Pancreas (tissue), 10 donors: ENCODE measurements at regions of chr17 and their contacts with region 1.

Region 1: DNA sequence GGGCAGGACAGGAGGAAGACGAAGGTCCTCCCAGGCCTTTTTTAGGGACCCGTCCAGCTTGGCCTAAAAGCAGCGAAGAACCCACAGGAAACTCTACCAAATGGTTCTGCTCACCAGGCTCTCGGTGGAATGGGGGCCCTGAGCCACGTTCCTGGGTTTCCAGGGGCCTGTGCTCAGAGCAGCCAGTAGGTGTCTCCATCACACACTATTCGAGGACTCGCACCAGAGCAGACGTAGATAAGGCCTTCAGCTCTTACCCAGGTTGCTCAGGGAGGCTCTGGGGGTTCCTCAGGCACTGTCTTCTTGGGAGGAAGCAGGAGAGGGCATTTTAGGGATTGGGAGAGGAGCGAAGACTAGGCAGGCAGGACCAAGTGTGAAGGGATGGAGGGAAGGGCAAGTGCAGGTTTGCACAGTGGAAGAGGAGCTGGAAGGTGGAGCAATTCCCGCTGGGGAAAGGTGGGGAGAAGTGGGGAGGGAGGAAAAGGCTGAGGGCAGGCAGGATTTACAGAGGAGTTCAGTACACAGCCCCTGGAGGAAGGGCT is 157.1 kb downstream of the RGS9 start:
- DNase-seq: peak; percentile 32 to 68 (median 58)
- ATAC-seq: peak; percentile 84 to 95 (median 94)
- H3K4me3 ChIP-seq: no peak overlapping the region
- H3K27ac ChIP-seq: no peak overlapping the region
- H3K4me1 ChIP-seq: no peaks in the 10 kb centered on the region
- H3K27me3 ChIP-seq: no peaks in the 10 kb centered on the region
- CTCF ChIP-seq: peak; percentile 49 to 69 (median 58)

Region 2: DNA sequence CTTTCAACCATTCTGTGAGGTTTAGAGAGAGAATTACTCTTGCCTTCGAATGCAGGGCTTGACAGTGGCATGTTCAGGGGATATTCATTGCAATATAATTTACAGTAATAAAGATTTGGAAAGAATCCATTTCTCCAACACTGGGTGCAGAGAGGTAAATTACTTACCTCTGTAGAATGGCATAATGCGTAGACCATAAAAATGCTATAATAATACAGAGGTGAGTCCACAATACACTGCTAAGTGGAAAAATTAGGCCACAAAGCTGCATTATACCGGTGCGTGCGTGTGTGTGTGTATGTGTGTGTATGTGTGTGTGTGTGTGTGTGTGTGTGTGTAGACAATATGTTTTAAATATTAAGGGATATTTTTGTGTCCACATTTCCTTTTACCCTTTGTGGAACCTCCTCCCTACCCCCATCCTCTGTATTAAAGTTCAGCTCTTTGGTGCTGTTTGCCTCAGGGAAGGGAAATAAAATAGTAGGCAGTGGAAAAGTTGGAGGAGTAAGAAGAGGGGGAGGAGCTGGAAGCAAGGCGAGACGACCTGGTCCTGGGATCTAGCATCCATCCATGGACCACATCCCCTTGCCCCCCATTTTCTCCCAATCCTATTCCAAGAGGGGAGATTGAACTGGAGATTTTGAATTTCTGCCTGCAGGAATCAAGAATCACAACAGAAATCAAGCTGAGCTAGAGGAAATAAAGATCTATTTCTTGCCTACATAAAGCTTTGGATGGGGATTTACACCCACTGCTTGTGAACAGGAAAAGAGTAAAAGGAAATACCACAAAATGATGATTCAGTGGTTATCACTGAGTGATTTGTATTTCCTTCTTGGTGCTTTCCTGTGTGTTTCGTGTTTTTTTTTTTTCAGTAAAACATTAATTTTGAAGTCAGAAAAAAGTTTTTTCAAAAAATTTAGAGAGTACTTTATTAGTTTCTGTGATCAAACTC is 32.3 kb before region 1 on chr17:
- intact Hi-C with region 1: no loop called
- DNase-seq: no peak
- ATAC-seq: no peak
- H3K4me3 ChIP-seq: no peak overlapping the region
- H3K27ac ChIP-seq: no peak overlapping the region
- H3K4me1 ChIP-seq: no peaks in the 10 kb centered on the region
- H3K27me3 ChIP-seq: no peaks in the 10 kb centered on the region
- CTCF ChIP-seq: no peak

Region 3: DNA sequence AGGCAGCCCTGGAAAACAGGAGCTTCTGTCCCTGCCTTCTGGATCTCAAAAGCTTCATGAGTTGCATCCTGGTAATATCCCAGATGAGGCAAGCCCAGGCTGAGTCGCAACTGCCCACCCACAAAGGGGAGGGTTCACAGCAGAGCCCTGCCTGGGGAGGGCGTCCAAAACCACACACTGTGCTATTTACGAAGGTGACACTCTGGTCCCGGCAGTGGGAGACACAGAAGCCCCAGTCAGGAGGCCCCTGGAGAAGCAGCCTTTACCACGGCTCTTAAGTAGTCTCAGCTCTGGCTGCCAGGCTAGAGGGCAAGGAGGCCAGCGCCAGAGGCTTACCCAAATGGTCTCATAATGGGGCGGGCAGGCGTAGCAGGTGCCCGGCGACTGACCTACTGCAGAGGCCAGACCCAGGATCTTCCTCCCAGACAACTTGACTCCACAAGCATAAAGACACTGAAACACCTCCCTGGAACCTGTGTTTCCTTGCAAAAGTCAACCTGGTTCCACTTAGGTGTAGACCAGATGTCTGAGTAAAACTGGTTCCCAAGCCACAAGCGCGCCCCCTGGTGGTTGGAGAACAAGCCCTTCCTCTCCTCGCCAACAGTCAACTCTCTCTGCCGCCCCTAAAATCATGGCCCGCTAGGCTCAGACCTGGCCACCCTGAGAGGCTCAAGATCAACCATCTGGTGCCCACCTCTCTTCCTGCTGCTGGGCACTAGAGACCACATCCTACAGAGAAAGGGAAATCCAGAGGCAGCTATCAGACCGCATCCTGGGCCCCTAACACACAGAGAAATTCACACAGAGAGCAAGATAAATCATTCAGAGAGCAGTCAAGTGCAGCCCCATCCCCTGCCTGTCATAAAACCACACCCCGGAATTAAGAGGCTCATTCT is 262.0 kb after region 1 on chr17:
- intact Hi-C with region 1: loop called in 2 of 3 experiments (anchors 10 kb)
- DNase-seq: peak; percentile 74 to 100 (median 90)
- ATAC-seq: peak; percentile 66 to 77 (median 70)
- H3K4me3 ChIP-seq: peak overlapping the region in 1 of 4 donors; percentile 10
- H3K27ac ChIP-seq: peak overlapping the region in 2 of 4 donors; percentile 16 to 17
- H3K4me1 ChIP-seq: peaks cover 7 to 29% (median 11%) of the 10 kb centered on the region in 3 donors
- H3K27me3 ChIP-seq: no peaks in the 10 kb centered on the region
- CTCF ChIP-seq: peak; percentile 64 to 90 (median 82)

Region 4: GRCh38 chr17:66165513-66166123 is 871.4 kb after region 1 on chr17:
- intact Hi-C with region 1: loop called in 1 of 3 experiments (anchors 5 kb)
- DNase-seq: peak in 2 of 6 donors; percentile 11 to 19
- ATAC-seq: peak in 3 of 4 donors; percentile 81 to 83 (median 82)
- H3K4me3 ChIP-seq: no peak overlapping the region
- H3K27ac ChIP-seq: no peak overlapping the region
- H3K4me1 ChIP-seq: no peaks in the 10 kb centered on the region
- H3K27me3 ChIP-seq: no peaks in the 10 kb centered on the region
- CTCF ChIP-seq: peak; percentile 9 to 63 (median 54)